ENCODE measurements at regions of chr17 and their contacts with region 1.

Region 1: GRCh38 chr17:60599620-60600489 is at the start of gene PPM1D:
- DNase-seq: peak; percentile 99
- H3K4me3 ChIP-seq: peak within 1 kb of the TSS; percentile 88
- H3K4me3 Mint-ChIP-seq: peak within 1 kb of the TSS; percentile 97
- H3K27ac Mint-ChIP-seq: peak within 1 kb of the TSS; percentile 98
- H3K4me1 ChIP-seq: 0 out of 2 replicates have a peak, but pooled peaks cover under 1% of the 10 kb centered on the region
- H3K4me1 Mint-ChIP-seq: peaks cover 23% of the 10 kb centered on the region
- H3K27me3 ChIP-seq: no peaks in the 10 kb centered on the region
- H3K27me3 Mint-ChIP-seq: no peaks in the 10 kb centered on the region
- CTCF ChIP-seq: no peak
- total RNA-seq, gene PPM1D: 17.9 and 18.7 TPM in 2 replicates

Region 2: GRCh38 chr17:60525685-60526514 is 74.0 kb before region 1 on chr17 and contains the start of gene APPBP2:
- CTCF ChIA-PET with region 1: interaction called, 4 read pairs
- POLR2A ChIA-PET with region 1: interaction called, 18 read pairs
- intact Hi-C with region 1: loop called (anchors 1 kb)
- DNase-seq: peak; percentile 88 to 90
- H3K4me3 ChIP-seq: peak within 1 kb of the TSS; percentile 87
- H3K4me3 Mint-ChIP-seq: peak within 1 kb of the TSS; percentile 96
- H3K27ac Mint-ChIP-seq: peak within 1 kb of the TSS; percentile 96
- H3K4me1 ChIP-seq: peaks cover 11% of the 10 kb centered on the region
- H3K4me1 Mint-ChIP-seq: no peaks in the 10 kb centered on the region
- H3K27me3 ChIP-seq: no peaks in the 10 kb centered on the region
- H3K27me3 Mint-ChIP-seq: no peaks in the 10 kb centered on the region
- CTCF ChIP-seq: no peak
- total RNA-seq, gene APPBP2: 25.3 and 29.8 TPM in 2 replicates

Region 3: DNA sequence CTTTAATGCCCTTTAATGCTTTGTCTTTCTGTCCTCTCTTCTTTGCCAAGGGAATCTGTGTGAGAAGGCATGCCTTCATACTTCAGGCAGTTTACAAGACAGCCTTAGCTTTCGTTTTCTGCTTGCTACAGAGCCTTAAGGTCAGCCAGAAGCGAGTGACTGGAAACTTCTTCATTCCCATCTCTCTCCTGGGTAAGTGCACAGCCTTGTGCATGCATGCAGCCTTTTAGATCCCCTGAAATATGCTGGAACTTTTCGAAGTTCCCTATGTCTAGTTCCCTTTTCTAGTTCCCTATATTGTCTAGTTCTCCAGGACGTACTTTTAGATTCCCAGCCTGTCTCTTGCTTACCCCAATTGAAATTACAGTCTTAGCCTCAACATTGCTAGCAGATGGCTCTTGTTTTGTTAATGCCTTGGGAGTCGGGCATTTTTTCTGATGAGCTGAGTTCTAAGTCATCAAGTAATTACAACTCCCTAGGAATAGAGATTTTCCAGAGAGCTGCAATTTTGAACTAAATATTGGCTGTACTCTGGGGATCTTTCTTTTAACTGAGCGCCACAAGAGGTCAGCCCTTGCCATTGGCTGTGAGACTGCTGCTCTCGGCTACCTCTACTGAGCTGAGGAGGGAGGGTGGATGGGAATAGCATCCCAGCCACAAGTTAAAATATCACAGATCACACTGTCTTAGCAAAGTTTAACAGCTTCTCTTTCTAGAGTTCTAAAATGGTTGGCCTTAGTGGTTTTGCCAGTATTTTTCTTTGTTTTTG is 22.5 kb before region 1 on chr17:
- CTCF ChIA-PET with region 1: interaction called, 36 read pairs
- POLR2A ChIA-PET with region 1: interaction called, 13 read pairs
- intact Hi-C with region 1: no loop called
- DNase-seq: peak in 1 of 2 experiments; percentile 45
- H3K4me3 ChIP-seq: 0 out of 2 replicates have a peak overlapping the region, but pooled peaks have one; percentile 9
- H3K4me3 Mint-ChIP-seq: peak overlapping the region; percentile 58
- H3K27ac Mint-ChIP-seq: peak overlapping the region; percentile 16
- H3K4me1 ChIP-seq: peaks cover 18% of the 10 kb centered on the region
- H3K4me1 Mint-ChIP-seq: no peaks in the 10 kb centered on the region
- H3K27me3 ChIP-seq: no peaks in the 10 kb centered on the region
- H3K27me3 Mint-ChIP-seq: no peaks in the 10 kb centered on the region
- CTCF ChIP-seq: no peak

Region 4: DNA sequence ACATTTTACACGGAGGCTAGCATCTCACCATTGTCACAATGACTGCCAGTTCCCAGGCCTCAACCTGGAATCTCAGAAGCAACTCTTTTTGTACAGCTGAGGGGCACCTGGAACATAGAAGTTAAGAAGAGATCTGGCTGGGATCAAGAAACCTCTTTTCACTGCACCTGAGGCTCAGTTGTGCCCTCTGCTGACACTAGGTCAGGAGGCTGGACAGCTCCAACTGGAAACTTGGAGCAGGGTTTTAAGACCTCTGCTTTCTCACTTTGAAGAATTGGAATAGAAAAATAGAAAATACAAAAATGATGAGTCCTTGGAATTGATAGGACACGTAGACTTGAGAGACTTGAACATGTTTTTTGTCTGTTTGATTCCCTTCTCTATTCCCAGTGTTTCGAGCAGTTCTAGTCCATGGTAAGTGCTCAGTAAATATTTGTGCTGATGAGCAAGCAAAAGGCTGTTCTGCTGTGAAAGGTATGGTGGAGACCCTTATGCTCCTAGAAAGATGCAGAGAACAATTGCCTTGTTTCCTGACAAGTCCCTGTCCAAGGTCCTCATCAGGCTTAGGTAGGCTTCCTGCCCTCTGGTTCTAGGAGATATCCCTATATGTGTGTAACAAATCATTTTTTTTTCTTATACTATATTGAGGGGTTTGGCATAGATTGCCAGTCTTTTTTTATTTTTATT is 13.4 kb before region 1 on chr17:
- CTCF ChIA-PET with region 1: interaction called, 5 read pairs
- POLR2A ChIA-PET with region 1: interaction called, 16 read pairs
- intact Hi-C with region 1: no loop called
- DNase-seq: peak in 1 of 2 experiments; percentile 43
- H3K4me3 ChIP-seq: no peak overlapping the region
- H3K4me3 Mint-ChIP-seq: no peak overlapping the region
- H3K27ac Mint-ChIP-seq: no peak overlapping the region
- H3K4me1 ChIP-seq: no peaks in the 10 kb centered on the region; the same call in 1 of the 2 replicates
- H3K4me1 Mint-ChIP-seq: peaks cover 4% of the 10 kb centered on the region
- H3K27me3 ChIP-seq: no peaks in the 10 kb centered on the region
- H3K27me3 Mint-ChIP-seq: no peaks in the 10 kb centered on the region
- CTCF ChIP-seq: peak in 1 of 2 experiments; percentile 50

Region 5: DNA sequence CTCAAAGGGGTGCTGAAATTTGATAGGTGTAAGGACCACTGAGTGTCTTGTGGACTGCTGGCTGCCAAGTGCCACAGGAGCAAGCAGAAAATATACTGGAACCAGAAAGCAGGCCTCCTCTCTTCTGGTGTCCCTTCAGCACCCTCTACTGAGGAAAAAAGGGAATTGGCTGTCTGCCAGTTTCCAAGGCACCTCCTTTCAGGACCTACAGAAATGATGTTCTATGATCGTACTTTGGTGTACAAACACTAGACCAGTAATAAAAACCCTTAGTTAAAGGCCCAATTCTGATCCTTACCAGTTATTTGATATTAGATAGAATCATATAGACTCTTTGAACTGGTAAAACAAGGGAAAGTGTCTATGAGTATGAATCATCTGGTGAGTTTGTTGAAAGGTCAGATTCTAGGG is 42.0 kb after region 1 on chr17:
- CTCF ChIA-PET with region 1: interaction called, 4 read pairs
- POLR2A ChIA-PET with region 1: interaction called, 5 read pairs
- intact Hi-C with region 1: loop called (anchors 5 kb)
- DNase-seq: peak; percentile 76 to 79
- H3K4me3 ChIP-seq: no peak overlapping the region
- H3K4me3 Mint-ChIP-seq: no peak overlapping the region
- H3K27ac Mint-ChIP-seq: no peak overlapping the region
- H3K4me1 ChIP-seq: peaks cover 5% of the 10 kb centered on the region; the same call in 1 of the 2 replicates
- H3K4me1 Mint-ChIP-seq: no peaks in the 10 kb centered on the region
- H3K27me3 ChIP-seq: no peaks in the 10 kb centered on the region
- H3K27me3 Mint-ChIP-seq: no peaks in the 10 kb centered on the region
- CTCF ChIP-seq: peak; percentile 85

Region 6: DNA sequence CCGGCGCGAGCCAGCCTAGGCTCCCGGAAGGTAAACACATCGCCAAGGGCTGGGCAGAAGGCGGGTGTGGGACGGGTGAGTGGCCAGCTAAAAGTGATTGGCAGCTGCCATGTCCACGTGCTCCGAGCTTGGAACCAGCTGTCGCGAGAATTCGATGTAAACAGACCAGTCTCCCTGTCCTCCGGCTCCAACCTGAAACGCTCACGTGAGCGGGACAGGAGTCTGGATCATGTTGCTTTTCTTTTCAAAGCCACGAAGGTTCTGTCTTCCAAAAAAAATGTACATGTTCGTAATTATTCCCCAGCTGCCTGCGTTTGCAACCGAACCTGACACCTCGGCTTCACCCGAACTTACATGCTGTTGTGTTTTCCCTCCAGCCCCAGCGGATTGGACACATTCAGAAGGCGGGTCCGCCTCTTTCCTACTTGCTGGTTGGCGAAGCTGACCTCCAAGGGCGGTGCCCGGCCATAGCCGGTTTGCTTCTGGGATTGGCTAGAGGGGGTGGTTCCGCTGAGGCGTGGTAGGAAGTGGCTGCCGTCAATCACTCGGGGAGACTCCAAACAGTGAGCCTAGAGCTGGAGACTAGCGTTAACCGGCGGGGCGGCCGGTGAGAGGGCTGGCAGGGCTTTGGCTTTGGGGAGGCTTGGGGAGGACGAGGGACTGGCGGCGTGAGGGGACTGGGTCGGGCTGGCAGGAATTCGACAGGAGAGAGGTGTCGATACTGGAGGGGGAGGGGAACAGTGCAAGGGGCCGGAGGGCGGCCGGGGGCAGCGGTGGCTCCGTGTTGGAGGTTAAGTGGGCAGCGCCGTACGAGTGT is 77.7 kb after region 1 on chr17 and contains the start of gene BCAS3:
- CTCF ChIA-PET with region 1: no interaction called
- POLR2A ChIA-PET with region 1: interaction called, 8 read pairs
- intact Hi-C with region 1: loop called (anchors 2 kb)
- DNase-seq: peak; percentile 98 to 99
- H3K4me3 ChIP-seq: peak within 1 kb of the TSS; percentile 88
- H3K4me3 Mint-ChIP-seq: peak within 1 kb of the TSS; percentile 96
- H3K27ac Mint-ChIP-seq: peak within 1 kb of the TSS; percentile 95
- H3K4me1 ChIP-seq: 0 out of 2 replicates have a peak, but pooled peaks cover 3% of the 10 kb centered on the region
- H3K4me1 Mint-ChIP-seq: peaks cover 14% of the 10 kb centered on the region
- H3K27me3 ChIP-seq: no peaks in the 10 kb centered on the region
- H3K27me3 Mint-ChIP-seq: no peaks in the 10 kb centered on the region
- CTCF ChIP-seq: no peak
- total RNA-seq, gene BCAS3: 35.6 and 44.1 TPM in 2 replicates

Region 7: GRCh38 chr17:60770946-60771422 is 171.1 kb after region 1 on chr17:
- CTCF ChIA-PET with region 1: no interaction called
- POLR2A ChIA-PET with region 1: no interaction called
- intact Hi-C with region 1: no loop called
- DNase-seq: no peak
- H3K4me3 ChIP-seq: no peak overlapping the region
- H3K4me3 Mint-ChIP-seq: no peak overlapping the region
- H3K27ac Mint-ChIP-seq: no peak overlapping the region
- H3K4me1 ChIP-seq: peaks cover 4% of the 10 kb centered on the region; the same call in 1 of the 2 replicates
- H3K4me1 Mint-ChIP-seq: no peaks in the 10 kb centered on the region
- H3K27me3 ChIP-seq: no peaks in the 10 kb centered on the region
- H3K27me3 Mint-ChIP-seq: peaks cover 2% of the 10 kb centered on the region
- CTCF ChIP-seq: no peak

Measured in Caco-2 (cell line).